ENCODE measurements at regions of chr17 and their contacts with region 1.

Region 1: DNA sequence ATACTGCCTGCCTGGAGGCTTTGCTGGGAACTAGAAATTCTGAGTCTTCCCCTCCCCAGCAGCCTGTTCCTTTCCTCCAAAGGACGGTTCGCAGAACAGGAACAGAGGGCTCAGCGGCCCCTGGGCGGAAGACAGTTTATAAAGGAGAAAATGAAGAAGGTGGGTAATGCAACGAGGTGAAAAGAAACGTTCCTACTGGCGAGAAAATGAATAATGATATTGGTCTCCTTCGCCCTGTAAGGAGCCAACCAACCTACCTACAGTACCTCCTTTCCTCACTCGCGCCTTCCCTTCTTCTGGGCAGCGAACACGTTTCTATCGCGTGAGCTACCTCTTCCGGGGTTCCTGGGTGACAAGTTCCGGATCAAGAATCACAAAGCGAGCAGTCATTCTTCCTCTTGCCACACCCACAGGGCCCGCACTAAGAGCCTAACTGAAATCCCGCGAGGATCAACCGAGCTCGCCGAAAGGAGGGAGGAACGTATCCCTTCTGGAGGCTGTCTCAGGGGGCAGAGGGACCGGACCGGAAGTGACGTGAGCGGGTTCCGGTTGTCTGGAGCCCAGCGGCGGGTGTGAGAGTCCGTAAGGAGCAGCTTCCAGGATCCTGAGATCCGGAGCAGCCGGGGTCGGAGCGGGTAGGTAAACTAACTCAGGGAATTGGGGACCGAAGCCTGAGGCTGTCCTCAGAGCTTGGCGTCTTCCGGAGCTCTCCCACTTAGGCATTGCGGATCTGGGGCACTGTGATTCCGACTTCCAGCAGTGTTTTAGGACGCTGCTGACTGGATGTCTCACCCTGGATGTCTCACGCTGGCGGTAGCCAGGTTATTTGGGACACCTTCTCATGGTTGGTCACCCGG is at the starts of genes PTRH2 and VMP1:
- DNase-seq: peak; percentile 97
- H3K4me3 Mint-ChIP-seq: peak within 1 kb of the TSS; percentile 94
- H3K27ac Mint-ChIP-seq: peak within 1 kb of the TSS; percentile 92
- H3K4me1 Mint-ChIP-seq: peaks cover 54% of the 10 kb centered on the region
- H3K27me3 Mint-ChIP-seq: no peaks in the 10 kb centered on the region
- total RNA-seq, gene PTRH2: 19.7 to 24.4 TPM
- total RNA-seq, gene VMP1: 423 to 438 TPM

Region 2: DNA sequence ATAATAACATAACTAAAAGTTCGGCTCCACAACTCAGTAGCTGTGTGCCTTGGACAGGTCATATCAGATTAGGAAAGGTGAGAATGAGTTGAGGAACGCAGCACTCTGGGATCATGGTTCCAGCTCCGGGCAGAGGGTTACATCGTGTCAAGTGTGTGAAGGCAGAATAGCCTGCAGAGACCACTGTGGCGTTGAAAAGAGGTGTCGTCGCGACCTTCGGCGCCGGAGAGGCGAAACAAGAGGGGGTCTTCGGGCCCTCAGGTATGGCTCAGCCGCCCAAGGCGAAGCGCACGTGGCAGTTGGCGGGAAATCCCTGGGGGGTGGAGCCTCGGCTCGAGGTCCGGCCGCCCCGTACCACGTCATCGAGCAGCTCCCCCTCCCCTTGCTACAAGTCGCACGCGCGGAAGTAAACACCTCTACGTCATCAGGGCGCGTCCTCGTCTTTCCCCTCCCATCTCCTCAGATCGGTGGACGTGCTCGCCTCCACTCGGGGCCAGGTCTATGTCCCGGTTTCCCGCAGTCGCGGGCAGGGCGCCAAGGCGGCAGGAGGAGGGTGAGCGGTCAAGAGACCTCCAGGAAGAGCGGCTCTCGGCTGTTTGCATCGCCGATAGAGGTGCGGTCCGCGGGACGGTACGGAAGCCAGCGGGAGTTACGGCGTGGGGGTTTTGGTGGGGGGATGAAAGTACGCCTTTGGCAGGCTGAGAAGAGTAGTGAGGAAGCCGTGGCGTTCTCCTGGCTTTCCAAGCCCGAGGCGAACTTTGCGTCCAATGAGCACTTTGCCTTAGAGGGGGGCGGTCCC is 142.0 kb before region 1 on chr17 and contains the start of gene DHX40:
- CTCF ChIA-PET with region 1: no interaction called
- intact Hi-C with region 1: loop called (anchors 1 kb)
- DNase-seq: peak; percentile 98
- H3K4me3 Mint-ChIP-seq: peak within 1 kb of the TSS; percentile 100
- H3K27ac Mint-ChIP-seq: peak within 1 kb of the TSS; percentile 98
- H3K4me1 Mint-ChIP-seq: peaks cover 21% of the 10 kb centered on the region
- H3K27me3 Mint-ChIP-seq: no peaks in the 10 kb centered on the region
- total RNA-seq, gene DHX40: 14.2 to 15.3 TPM

Region 3: DNA sequence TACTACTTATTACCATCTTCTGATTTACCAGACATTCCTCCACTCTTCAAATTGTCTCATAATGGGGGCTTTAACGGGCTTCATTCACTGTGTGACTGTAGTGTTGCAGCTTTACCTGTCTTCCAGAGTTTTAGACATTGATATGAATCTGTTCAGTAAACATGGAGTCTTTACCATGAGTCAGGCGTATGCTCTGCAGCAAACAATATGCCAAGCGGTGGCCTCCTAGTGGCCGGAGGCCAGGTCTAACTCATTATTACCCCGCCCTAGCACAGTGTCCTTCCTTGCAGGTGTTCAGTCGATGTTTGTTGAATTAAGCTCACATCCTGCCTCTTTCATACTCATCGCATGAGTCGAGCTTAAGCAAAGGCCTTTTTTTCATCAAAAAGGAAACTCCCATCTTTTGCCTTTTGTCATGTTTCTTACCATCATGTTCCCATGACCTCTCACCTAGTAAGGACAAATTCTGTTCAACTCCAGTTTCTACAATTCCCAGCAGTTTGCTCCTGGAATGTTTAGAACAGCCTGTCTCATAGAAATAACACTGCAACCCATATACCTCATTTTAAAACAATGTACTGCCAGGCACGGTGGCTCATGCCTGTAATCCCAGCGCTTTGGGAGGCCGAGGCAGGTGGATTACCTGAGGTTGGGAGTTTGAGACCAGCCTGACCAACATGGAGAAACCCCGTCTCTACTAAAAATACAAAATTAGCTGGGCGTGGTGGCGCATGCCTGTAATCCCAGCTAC is 146.0 kb after region 1 on chr17:
- CTCF ChIA-PET with region 1: no interaction called
- intact Hi-C with region 1: loop called (anchors 2 kb)
- DNase-seq: peak; percentile 86
- H3K4me3 Mint-ChIP-seq: peak overlapping the region; percentile 4
- H3K27ac Mint-ChIP-seq: peak overlapping the region; percentile 77
- H3K4me1 Mint-ChIP-seq: peaks cover 57% of the 10 kb centered on the region
- H3K27me3 Mint-ChIP-seq: no peaks in the 10 kb centered on the region